GM13977 (cell line): ENCODE measurements at regions of chr6 and their contacts with region 1.

Region 1: DNA sequence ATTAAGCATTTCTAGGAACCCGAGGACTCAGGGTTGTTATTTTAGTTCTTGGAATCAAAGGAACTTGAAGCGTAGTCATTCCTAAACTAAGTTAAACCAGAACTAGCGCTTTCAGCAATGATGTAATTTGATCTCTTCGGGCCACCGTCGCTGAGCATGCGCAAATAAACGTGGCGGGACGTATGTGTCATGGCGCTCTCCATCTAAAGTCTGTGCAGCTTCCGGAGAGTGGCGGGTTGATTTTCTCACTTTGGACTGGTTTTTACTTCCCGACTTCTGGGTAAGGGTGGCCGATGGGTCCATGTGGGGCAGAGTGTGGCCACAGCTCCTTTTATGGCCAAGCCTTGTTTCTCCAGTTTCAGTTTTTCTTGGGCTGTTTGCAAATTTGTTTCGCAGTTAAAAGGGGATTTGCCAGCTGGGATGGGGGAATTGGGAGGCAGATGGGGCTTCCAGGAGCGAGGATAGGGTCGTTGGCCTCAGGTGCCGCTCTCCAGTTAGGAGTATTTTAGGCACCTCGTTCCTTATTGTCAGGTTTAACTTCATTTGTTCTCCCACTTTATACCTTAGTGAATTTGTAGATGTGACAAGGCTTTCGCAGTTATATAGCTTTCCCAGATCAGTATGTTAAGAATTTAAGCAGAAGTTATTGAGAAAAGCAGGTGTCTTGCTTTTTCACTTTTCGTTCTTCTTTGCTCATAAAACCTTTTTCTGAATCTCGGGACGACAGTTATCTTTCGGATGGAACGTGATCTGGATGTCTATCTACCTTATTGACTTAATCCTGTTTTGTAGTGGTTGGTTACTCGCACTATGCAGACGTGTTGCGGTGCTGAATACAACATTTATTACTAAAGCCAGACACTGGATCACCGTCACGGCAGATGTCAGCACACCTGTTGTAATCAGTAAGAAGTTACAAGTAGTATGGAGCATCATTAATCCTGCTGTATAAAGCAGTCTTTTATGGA is at the start of gene CDKAL1:
- DNase-seq: peak; percentile 64
- CTCF ChIP-seq: no peak

Region 2: GRCh38 chr6:20092071-20092566 is 442.5 kb before region 1 on chr6:
- in situ Hi-C with region 1: loop called (anchors 25 kb)
- DNase-seq: no peak
- CTCF ChIP-seq: peak; percentile 62

Region 3: GRCh38 chr6:20291764-20292580 is 242.6 kb before region 1 on chr6:
- in situ Hi-C with region 1: loop called (anchors 5 kb)
- DNase-seq: peak; percentile 63
- CTCF ChIP-seq: peak; percentile 90

Region 4: GRCh38 chr6:20399518-20399917 is 135.1 kb before region 1 on chr6:
- in situ Hi-C with region 1: loop called (anchors 10 kb)
- DNase-seq: no peak
- CTCF ChIP-seq: no peak